Activated CD4-positive, alpha-beta T cell treated with anti-CD3 and anti-CD28 coated beads, Interleukin-2, amount 10 ng/mL, durations not matched to agents 24 days and 14 days (primary cell): ENCODE measurements at regions of chr7 and their contacts with region 1.

Region 1: GRCh38 chr7:48088559-48089045 is 463 bp upstream of the UPP1 start:
- DNase-seq: no peak
- H3K4me3 Mint-ChIP-seq: peak overlapping the region; percentile 91
- H3K27ac Mint-ChIP-seq: peak overlapping the region; percentile 96
- H3K4me1 Mint-ChIP-seq: peaks cover 71% of the 10 kb centered on the region
- H3K27me3 Mint-ChIP-seq: no peaks in the 10 kb centered on the region

Region 2: DNA sequence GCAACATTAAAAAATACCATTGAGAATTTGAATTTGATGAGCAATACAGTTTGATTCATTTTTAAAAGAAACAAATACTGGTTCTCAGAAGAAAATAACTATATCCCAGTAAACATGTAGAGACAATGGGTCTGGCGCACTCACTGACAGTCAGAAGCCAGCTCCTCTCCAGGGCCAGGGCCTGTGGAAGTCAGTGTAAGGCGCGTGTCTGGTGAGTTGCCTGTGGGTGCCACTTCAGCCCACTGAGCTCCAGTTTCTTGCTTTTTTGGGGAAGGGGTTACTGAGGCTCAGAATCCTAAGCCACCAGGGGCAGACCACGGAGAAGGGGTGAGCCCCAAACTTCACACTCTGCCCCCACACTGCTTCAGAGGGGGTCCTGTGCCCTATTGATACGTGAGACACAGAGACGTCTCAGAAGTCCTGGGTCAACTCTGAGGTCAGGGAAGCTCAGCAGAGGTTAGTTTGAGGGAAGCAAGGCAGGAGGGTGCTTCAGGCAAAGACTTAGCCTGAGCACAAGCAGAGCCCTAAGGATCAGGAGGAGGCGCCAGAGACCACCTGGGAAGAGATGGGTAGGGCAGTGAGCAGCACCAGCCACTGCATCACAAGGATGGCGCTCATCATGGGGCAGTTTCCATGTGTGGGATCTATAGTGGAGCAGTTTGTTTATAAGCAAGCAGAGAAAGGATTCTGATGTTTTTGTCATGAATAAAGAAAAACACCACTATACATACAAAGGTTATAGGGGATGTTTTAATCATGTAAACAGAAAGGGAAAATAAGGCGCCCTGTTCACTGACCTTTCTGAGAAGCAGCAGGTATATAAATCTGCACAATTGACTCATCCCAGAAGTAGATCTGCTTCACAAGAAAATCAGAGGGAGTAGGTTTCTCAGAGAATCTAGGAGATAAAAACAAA is 236.0 kb before region 1 on chr7:
- intact Hi-C with region 1: no loop called
- DNase-seq: no peak
- H3K4me3 Mint-ChIP-seq: no peak overlapping the region
- H3K27ac Mint-ChIP-seq: no peak overlapping the region
- H3K4me1 Mint-ChIP-seq: no peaks in the 10 kb centered on the region
- H3K27me3 Mint-ChIP-seq: peaks cover 1% of the 10 kb centered on the region

Region 3: DNA sequence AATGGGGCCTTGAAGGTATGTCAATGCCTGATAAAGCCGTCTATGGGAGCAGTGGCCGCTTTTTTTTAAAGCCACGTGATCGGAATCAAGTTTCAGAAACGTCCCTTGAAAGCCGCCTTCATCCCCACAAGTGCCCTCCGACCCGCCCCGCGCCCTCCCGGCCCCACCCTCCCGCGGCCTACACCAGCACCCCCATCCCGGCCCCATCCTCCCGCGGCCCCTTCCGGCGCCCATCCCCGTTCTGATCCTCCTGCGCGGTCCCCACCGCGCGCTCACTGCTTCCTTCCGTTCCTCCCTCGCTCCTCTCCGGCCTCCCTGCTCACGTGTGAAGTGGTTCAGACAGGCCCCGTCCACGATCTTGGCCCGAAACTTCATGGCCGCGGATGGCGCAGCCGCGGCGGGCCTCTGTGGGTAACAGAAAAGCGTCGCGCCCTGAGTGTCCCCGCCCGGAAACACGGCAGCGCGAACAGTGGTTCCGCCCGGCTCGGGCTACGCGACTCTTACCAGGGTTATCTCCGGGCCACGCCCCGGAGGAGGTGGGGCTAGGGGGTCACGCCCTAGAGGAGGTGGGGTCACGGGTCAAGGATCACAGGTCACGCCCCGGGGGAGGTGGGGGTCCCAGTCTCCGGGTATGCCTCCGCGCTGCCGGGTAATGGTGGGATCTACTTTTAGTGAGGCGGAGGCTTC is 109.3 kb before region 1 on chr7 and contains the start of gene HUS1:
- intact Hi-C with region 1: loop called (anchors 1 kb)
- DNase-seq: peak; percentile 98
- H3K4me3 Mint-ChIP-seq: peak within 1 kb of the TSS; percentile 94
- H3K27ac Mint-ChIP-seq: peak within 1 kb of the TSS; percentile 97
- H3K4me1 Mint-ChIP-seq: peaks cover 16% of the 10 kb centered on the region
- H3K27me3 Mint-ChIP-seq: peaks cover 5% of the 10 kb centered on the region
- total RNA-seq, gene HUS1: 32.3 and 35.9 TPM in 2 replicates

Region 4: GRCh38 chr7:48035301-48035966 is 53.2 kb before region 1 on chr7 and contains the start of gene C7orf57:
- intact Hi-C with region 1: loop called (anchors 1 kb)
- DNase-seq: peak; percentile 97
- H3K4me3 Mint-ChIP-seq: peak within 1 kb of the TSS; percentile 84
- H3K27ac Mint-ChIP-seq: peak within 1 kb of the TSS; percentile 74
- H3K4me1 Mint-ChIP-seq: peaks cover 11% of the 10 kb centered on the region
- H3K27me3 Mint-ChIP-seq: peaks cover 64% of the 10 kb centered on the region
- total RNA-seq, gene C7orf57: 0.14 TPM in 2 replicates

Region 5: GRCh38 chr7:48052748-48053147 is 35.9 kb before region 1 on chr7:
- intact Hi-C with region 1: loop called (anchors 2 kb)
- DNase-seq: no peak
- H3K4me3 Mint-ChIP-seq: no peak overlapping the region
- H3K27ac Mint-ChIP-seq: no peak overlapping the region
- H3K4me1 Mint-ChIP-seq: peaks cover 11% of the 10 kb centered on the region
- H3K27me3 Mint-ChIP-seq: peaks cover 7% of the 10 kb centered on the region

Region 6: GRCh38 chr7:48130658-48131108 is 42.1 kb after region 1 on chr7:
- intact Hi-C with region 1: loop called (anchors 1 kb)
- DNase-seq: peak; percentile 44
- H3K4me3 Mint-ChIP-seq: no peak overlapping the region
- H3K27ac Mint-ChIP-seq: no peak overlapping the region
- H3K4me1 Mint-ChIP-seq: peaks cover 5% of the 10 kb centered on the region
- H3K27me3 Mint-ChIP-seq: peaks cover 23% of the 10 kb centered on the region

Region 7: GRCh38 chr7:48376263-48376662 is 287.7 kb after region 1 on chr7:
- intact Hi-C with region 1: no loop called
- DNase-seq: no peak
- H3K4me3 Mint-ChIP-seq: no peak overlapping the region
- H3K27ac Mint-ChIP-seq: no peak overlapping the region
- H3K4me1 Mint-ChIP-seq: no peaks in the 10 kb centered on the region
- H3K27me3 Mint-ChIP-seq: no peaks in the 10 kb centered on the region